Upper lobe of right lung (tissue), 1 donor: ENCODE measurements at regions of chr17 and their contacts with region 1.

Region 1: GRCh38 chr17:40362696-40363110 is 1.8 kb downstream of the GJD3 start:
- DNase-seq: peak; percentile 94
- ATAC-seq: peak; percentile 86
- H3K4me3 ChIP-seq: peak overlapping the region; percentile 59
- H3K27ac ChIP-seq: no peak overlapping the region
- H3K4me1 ChIP-seq: peaks cover 13% of the 10 kb centered on the region
- H3K27me3 ChIP-seq: no peaks in the 10 kb centered on the region
- CTCF ChIP-seq: peak; percentile 66

Region 2: GRCh38 chr17:40314584-40314955 is 48.1 kb before region 1 on chr17:
- intact Hi-C with region 1: no loop called
- DNase-seq: peak; percentile 96
- ATAC-seq: peak; percentile 44
- H3K4me3 ChIP-seq: no peak overlapping the region
- H3K27ac ChIP-seq: peak overlapping the region; percentile 55
- H3K4me1 ChIP-seq: peaks cover 76% of the 10 kb centered on the region
- H3K27me3 ChIP-seq: no peaks in the 10 kb centered on the region
- CTCF ChIP-seq: no peak

Region 3: DNA sequence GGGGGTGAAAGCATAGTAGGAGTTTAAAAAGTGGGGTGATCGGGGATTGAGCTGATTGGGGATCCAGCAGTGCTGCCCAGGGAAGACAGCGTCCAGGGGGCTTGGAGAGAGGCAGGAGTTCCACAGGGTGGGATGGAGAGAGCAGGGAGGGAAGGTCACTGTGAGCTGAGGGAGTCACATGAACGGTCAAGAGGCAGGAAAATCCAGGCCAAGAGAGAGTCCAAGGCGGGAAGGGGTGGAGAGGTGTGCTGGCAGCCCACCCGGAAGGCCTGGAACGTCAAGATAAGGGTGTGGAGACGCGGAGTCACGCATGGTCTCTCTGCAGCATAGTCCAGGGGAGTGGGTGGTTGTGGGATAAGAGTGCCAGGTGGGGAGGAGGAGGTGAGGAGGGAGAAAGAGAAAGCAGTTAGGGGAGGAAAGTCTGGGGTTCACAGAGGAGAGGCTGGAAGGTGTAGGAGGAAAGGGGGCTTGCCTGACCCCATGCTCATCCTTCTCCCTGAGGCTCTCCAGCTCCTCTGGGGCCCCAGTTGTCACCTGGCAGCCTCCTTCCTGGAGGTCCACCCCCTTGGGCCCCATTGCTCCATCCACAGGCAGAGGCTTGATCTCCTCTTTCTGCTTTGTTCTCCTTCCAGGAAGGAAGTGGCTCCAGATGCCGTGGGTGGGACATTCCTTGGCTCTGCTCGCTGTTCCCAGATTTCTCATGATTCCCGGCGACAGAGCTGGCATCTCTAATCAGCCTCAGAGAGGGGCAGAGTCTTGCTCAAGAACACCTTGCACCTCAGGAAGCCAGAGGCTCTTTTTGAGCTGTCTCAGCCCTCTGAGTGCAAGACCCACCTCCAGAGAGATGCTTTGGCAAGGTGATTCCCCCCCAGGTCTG is 173.8 kb after region 1 on chr17:
- intact Hi-C with region 1: loop called (anchors 10 kb)
- DNase-seq: peak; percentile 73
- ATAC-seq: peak; percentile 23
- H3K4me3 ChIP-seq: no peak overlapping the region
- H3K27ac ChIP-seq: peak overlapping the region; percentile 86
- H3K4me1 ChIP-seq: peaks cover 82% of the 10 kb centered on the region
- H3K27me3 ChIP-seq: no peaks in the 10 kb centered on the region
- CTCF ChIP-seq: no peak

Region 4: DNA sequence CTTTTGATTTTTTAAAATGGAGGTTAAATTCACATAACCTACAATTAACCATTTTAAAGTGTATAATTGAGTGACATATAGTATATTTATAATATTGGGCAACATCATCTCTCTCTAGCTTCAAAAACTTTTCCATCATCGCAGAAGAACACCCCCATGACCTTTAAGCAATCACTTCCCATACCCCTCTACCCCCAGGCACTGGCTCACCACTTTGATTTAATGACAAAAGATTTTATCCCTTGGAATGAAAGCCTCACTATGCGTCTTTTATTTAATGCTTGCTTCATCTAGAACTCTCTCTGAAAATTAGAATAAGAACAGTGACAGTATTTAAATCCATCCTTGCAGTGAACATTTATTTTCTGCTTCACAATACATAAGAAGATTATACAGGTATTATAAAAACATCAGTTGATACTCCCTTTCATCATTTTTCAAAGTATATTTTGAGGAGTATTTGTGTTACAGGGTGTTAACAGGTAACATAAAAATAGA is 675.2 kb after region 1 on chr17:
- intact Hi-C with region 1: no loop called
- DNase-seq: no peak
- ATAC-seq: no peak
- H3K4me3 ChIP-seq: no peak overlapping the region
- H3K27ac ChIP-seq: no peak overlapping the region
- H3K4me1 ChIP-seq: no peaks in the 10 kb centered on the region
- H3K27me3 ChIP-seq: no peaks in the 10 kb centered on the region
- CTCF ChIP-seq: no peak